ENCODE measurements at regions of chr3 and their contacts with region 1.

Region 1: GRCh38 chr3:17258823-17259436 is 374.2 kb downstream of the PLCL2 start:
- DNase-seq: no peak

Region 2: GRCh38 chr3:17412950-17413530 is 154.1 kb after region 1 on chr3:
- intact Hi-C with region 1: loop called (anchors 2 kb)
- DNase-seq: no peak

Region 3: DNA sequence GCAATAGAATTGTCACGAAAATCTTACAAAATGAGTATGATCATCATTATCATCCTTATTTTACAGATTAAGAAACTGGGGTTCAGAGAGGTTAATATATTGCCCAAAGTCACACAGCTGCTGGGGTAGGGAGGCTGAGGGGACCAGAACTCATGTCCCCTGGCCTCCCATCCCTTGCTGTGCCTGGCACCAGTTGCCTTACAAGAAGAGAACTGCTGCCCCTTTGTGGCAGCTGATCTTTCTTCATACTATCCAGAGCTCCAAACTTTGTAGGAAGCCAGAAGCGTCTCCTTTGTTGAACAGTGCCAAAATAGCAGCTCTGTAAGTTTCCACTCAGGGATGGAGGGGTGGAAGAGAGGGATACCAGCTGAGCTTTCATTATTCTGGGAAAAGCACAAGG is 720.3 kb after region 1 on chr3:
- intact Hi-C with region 1: loop called (anchors 5 kb)
- DNase-seq: peak in 7 of 10 donors; percentile 13 to 87 (median 34)

Measured in posterior cingulate gyrus (tissue), 11 donors.